ENCODE measurements at regions of chr12 and their contacts with region 1.

Region 1: DNA sequence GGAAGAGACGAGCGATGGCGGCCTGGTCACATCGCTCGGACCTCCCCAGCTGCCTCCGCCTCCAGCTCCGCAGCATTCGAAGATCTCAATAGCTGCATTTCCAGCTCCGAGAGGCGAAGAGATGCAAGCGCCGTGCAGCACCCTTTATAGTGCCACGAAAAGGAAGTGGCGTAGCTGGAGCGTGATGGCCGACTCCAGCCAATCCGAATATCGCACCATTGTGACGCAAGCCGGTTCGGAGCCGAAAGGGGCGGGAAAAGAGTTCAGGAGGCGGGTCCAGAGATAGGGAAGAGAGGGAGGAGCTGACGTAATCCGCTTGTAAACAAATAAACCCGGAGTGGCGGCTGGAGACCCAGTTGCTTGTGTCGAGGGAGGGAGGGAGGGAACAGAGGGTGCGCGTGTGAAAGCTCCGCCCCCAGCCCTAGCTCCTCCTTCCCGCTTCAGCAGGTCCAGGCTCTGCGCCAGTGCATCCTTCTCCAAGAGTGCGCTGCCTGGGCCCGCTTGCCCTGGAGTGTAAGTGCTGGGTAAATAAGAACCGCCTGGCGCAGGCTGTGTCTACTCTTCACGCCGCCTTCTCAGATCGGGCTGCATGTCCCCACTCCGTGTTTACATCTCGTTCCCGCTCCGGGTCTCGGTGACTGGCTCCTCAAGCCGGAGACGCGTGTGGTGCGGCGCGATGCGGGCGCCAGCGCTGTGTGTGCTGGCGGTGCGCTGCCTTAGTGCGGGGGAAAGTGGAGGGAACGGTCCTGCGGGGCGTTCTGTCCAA is at the start of gene BTG1:
- DNase-seq: peak; percentile 97 to 100
- H3K4me3 ChIP-seq: peak within 1 kb of the TSS; percentile 94 to 95
- H3K27ac ChIP-seq: peak within 1 kb of the TSS; percentile 99 to 100
- H3K4me1 ChIP-seq: no peaks in the 10 kb centered on the region
- H3K27me3 ChIP-seq: no peaks in the 10 kb centered on the region
- CTCF ChIP-seq: no peak
- total RNA-seq, gene BTG1: 17.3 TPM

Region 2: GRCh38 chr12:91382081-91382543 is 763.8 kb before region 1 on chr12:
- intact Hi-C with region 1: loop called (anchors 5 kb)
- DNase-seq: peak in 1 of 2 donors; percentile 92
- H3K4me3 ChIP-seq: peak overlapping the region; percentile 55 to 61
- H3K27ac ChIP-seq: peak overlapping the region in 1 of 2 donors; percentile 1
- H3K4me1 ChIP-seq: no peaks in the 10 kb centered on the region
- H3K27me3 ChIP-seq: no peaks in the 10 kb centered on the region
- CTCF ChIP-seq: peak; percentile 75 to 89 (median 84)

Region 3: DNA sequence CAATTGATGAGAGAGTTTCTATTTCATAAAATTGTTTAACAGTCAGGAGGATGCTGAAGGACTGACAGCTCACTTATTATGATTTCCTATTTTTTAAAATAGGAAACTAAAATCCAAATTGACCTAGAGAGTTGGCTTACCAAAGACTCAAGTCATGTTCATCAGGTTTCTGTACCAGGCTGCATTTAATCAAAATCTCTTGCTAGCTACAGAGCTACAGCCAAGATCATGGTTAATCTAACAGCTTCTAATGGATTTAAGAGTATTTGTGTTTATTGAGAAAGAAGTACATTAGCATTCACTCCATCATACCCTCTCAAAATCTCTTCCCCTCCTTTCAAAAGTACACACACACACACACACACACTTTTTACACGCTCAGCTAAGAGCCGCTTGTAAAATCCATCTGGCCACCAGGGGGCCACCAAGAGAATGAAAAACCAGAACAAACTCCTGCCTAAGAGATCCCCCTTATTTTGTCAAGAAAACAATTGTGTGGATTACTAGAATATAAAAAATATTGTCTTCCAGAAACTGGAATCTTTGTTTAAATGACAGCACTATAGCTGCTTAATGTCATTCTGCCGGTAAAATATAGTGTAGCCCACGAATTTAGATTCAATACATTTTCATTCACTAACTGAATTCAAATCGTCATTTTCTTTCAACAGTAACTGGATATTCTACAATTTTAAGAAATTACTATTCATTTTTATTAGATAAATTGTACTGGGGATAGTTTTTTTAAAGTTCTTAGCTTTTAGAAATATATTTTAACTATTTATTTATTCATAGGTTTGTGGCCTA is 334.2 kb before region 1 on chr12:
- intact Hi-C with region 1: loop called (anchors 5 kb)
- DNase-seq: peak in 1 of 2 donors; percentile 85
- H3K4me3 ChIP-seq: no peak overlapping the region
- H3K27ac ChIP-seq: no peak overlapping the region
- H3K4me1 ChIP-seq: no peaks in the 10 kb centered on the region
- H3K27me3 ChIP-seq: no peaks in the 10 kb centered on the region
- CTCF ChIP-seq: peak; percentile 60 to 81 (median 63)

Region 4: GRCh38 chr12:91991399-91992187 is 154.3 kb before region 1 on chr12:
- intact Hi-C with region 1: loop called (anchors 2 kb)
- DNase-seq: no peak
- H3K4me3 ChIP-seq: no peak overlapping the region
- H3K27ac ChIP-seq: peak overlapping the region; percentile 53 to 76
- H3K4me1 ChIP-seq: peaks cover 0 to 14% of the 10 kb centered on the region in 2 donors
- H3K27me3 ChIP-seq: no peaks in the 10 kb centered on the region
- CTCF ChIP-seq: no peak

Region 5: DNA sequence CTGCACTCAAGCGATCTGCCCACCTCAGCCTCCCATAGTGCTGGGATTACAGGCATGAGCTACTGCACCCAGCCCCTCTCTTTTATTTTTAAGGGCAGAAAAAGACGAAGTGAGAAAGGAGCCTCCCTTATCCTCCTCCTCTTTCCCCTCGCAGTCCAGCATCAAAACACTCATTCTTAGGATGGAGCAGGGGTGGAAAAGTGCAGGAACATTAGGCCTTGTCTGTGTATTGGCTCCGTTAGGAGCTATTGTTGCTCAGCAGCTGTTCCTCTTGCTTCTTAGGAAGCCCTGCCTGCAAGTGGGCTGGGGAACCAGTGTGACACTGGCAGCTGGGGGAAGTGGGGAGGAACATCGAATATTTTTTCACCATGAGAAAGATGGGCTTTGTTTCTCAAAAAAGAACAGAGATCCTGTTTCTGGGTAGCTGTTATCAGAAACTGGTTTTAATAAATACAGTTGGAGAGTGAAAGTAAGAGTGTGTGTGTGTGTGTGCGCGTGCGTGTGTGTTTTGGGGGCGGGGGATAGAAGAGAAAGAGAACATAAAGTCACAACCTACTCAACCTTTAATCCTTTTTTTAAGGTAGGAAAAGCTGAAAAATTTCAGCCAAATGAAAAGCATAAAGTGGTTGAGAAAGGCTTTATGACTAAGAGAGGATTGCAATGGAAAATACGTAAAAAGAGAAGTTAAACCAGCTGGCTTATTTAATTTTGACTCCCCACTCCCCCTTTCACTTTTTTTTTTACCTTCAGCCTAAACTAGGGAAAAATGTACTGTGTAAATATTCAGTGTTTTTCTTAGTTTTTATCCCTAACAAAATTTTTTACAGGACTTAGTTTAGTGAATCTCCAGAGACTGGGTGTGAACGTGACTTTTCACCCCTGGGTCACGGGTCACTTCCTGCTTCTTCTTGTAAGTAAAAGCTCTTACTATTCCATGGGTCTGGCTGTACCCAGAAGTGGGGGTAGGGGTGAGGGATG is 359.6 kb after region 1 on chr12:
- intact Hi-C with region 1: loop called (anchors 5 kb)
- DNase-seq: peak in 1 of 2 donors; percentile 79
- H3K4me3 ChIP-seq: peak overlapping the region; percentile 20 to 44
- H3K27ac ChIP-seq: peak overlapping the region; percentile 82
- H3K4me1 ChIP-seq: peaks cover 5 to 23% of the 10 kb centered on the region in 2 donors
- H3K27me3 ChIP-seq: no peaks in the 10 kb centered on the region
- CTCF ChIP-seq: no peak

Region 6: DNA sequence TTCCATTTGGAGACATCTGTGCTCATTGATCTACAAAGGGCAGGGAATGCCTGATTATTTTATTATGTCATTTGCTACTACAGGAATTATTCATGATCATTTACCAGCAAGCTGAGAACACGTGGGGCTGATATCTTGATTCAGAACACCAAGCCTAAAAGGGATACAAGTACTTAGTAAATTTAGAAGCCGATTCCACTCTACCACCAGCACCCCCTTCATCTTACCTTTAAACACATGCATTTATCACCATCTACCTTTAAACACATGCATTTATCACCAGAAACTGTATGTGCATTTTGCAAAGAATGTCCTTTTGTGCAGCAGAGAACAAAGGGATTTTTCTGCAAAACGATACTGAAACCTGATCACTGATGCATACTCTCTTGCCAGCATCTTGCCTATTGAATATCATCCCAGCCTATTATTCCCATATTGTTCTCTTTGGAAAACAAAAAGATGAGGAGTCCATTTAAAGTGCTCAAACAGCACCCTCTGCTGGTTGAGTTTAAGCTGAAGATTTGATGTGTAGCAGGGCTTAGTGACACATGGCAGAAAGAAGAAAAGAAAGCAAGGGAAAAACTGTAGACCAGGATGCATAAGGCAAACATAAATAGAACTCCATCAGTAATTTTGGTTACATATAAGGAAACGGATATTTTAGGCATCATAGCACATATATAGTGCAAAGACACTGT is 424.3 kb after region 1 on chr12:
- intact Hi-C with region 1: loop called (anchors 2 kb)
- DNase-seq: peak in 1 of 2 donors; percentile 82
- H3K4me3 ChIP-seq: no peak overlapping the region
- H3K27ac ChIP-seq: no peak overlapping the region
- H3K4me1 ChIP-seq: no peaks in the 10 kb centered on the region
- H3K27me3 ChIP-seq: no peaks in the 10 kb centered on the region
- CTCF ChIP-seq: peak; percentile 51 to 87 (median 71)